ENCODE measurements at regions of chr17 and their contacts with region 1.

Region 1: GRCh38 chr17:33520426-33521330 is 227.6 kb upstream of the ASIC2 start:
- DNase-seq: no peak
- ATAC-seq: peak; percentile 81
- H3K4me3 ChIP-seq: no peak overlapping the region
- H3K27ac ChIP-seq: no peak overlapping the region
- H3K4me1 ChIP-seq: no peaks in the 10 kb centered on the region
- H3K27me3 ChIP-seq: no peaks in the 10 kb centered on the region; a peak in 1 of 4 replicates
- CTCF ChIP-seq: peak; percentile 68 to 85 (median 68)
- EP300 ChIP-seq: no peak
- POLR2A ChIP-seq: no peak
- RAD21 ChIP-seq: peak; percentile 38; the same call in 1 of the 2 replicates

Region 2: GRCh38 chr17:33377837-33378595 is 142.7 kb before region 1 on chr17:
- CTCF ChIA-PET with region 1: interaction called, 11 read pairs
- POLR2A ChIA-PET with region 1: no interaction called
- RAD21 ChIA-PET with region 1: no interaction called
- SMC1A ChIA-PET with region 1: interaction called, 4 read pairs
- in situ Hi-C with region 1: no loop called
- intact Hi-C with region 1: no loop called
- DNase-seq: no peak
- ATAC-seq: peak; percentile 32; the same call in 1 of the 3 replicates
- H3K4me3 ChIP-seq: no peak overlapping the region
- H3K27ac ChIP-seq: no peak overlapping the region
- H3K4me1 ChIP-seq: no peaks in the 10 kb centered on the region
- H3K27me3 ChIP-seq: peaks cover 0 to 4% of the 10 kb centered on the region in 2 experiments; a peak in 1 of 4 replicates
- CTCF ChIP-seq: no peak; a peak in 1 of 6 replicates
- EP300 ChIP-seq: no peak
- POLR2A ChIP-seq: no peak
- RAD21 ChIP-seq: no peak

Region 3: GRCh38 chr17:33459078-33459940 is 61.4 kb before region 1 on chr17:
- CTCF ChIA-PET with region 1: interaction called, 29 read pairs
- POLR2A ChIA-PET with region 1: no interaction called
- RAD21 ChIA-PET with region 1: interaction called, 15 read pairs
- SMC1A ChIA-PET with region 1: interaction called, 26 read pairs
- in situ Hi-C with region 1: no loop called
- intact Hi-C with region 1: no loop called
- DNase-seq: peak; percentile 44
- ATAC-seq: peak; percentile 93
- H3K4me3 ChIP-seq: no peak overlapping the region
- H3K27ac ChIP-seq: no peak overlapping the region
- H3K4me1 ChIP-seq: peaks cover 3% of the 10 kb centered on the region; the same call in 1 of the 2 replicates
- H3K27me3 ChIP-seq: no peaks in the 10 kb centered on the region
- CTCF ChIP-seq: peak in 2 of 3 experiments; percentile 10 to 35; a peak in 2 of 6 replicates
- EP300 ChIP-seq: peak; percentile 21 to 44; a peak in 1 of 4 replicates
- POLR2A ChIP-seq: no peak
- RAD21 ChIP-seq: no peak

Region 4: GRCh38 chr17:33506889-33507650 is 13.6 kb before region 1 on chr17:
- CTCF ChIA-PET with region 1: interaction called, 12 read pairs
- POLR2A ChIA-PET with region 1: no interaction called
- RAD21 ChIA-PET with region 1: no interaction called
- SMC1A ChIA-PET with region 1: interaction called, 4 read pairs
- in situ Hi-C with region 1: no loop called
- intact Hi-C with region 1: no loop called
- DNase-seq: no peak
- ATAC-seq: peak; percentile 48
- H3K4me3 ChIP-seq: no peak overlapping the region
- H3K27ac ChIP-seq: no peak overlapping the region
- H3K4me1 ChIP-seq: no peaks in the 10 kb centered on the region
- H3K27me3 ChIP-seq: no peaks in the 10 kb centered on the region
- CTCF ChIP-seq: no peak
- EP300 ChIP-seq: no peak
- POLR2A ChIP-seq: no peak
- RAD21 ChIP-seq: no peak

Region 5: DNA sequence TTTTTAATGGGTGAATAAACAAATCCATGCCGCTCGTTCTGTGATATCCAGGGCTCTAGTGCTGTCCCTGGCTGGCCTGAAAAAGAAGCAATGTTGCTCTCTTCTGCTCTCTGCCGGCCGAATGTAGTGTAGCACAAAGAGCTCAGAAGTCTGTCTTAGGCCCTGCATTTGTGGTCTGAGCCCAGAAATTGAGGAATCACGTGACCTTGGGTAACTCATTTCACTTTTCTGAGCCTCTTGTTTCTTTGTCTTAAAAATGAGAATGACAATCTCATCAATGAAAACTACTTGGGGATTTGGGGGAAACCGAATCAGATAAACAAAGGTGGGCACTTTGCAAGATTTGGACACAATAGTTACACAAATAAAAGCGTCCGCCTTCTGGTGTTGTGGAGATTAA is 154.0 kb after region 1 on chr17:
- CTCF ChIA-PET with region 1: interaction called, 24 read pairs
- POLR2A ChIA-PET with region 1: no interaction called
- RAD21 ChIA-PET with region 1: interaction called, 6 read pairs
- SMC1A ChIA-PET with region 1: interaction called, 4 read pairs
- in situ Hi-C with region 1: loop called (anchors 10 kb)
- intact Hi-C with region 1: loop called (anchors 2 kb)
- DNase-seq: peak; percentile 19
- ATAC-seq: peak; percentile 96
- H3K4me3 ChIP-seq: no peak overlapping the region
- H3K27ac ChIP-seq: no peak overlapping the region
- H3K4me1 ChIP-seq: no peaks in the 10 kb centered on the region
- H3K27me3 ChIP-seq: no peaks in the 10 kb centered on the region
- CTCF ChIP-seq: peak; percentile 77 to 80 (median 79)
- EP300 ChIP-seq: no peak
- POLR2A ChIP-seq: no peak
- RAD21 ChIP-seq: peak; percentile 69

Region 6: DNA sequence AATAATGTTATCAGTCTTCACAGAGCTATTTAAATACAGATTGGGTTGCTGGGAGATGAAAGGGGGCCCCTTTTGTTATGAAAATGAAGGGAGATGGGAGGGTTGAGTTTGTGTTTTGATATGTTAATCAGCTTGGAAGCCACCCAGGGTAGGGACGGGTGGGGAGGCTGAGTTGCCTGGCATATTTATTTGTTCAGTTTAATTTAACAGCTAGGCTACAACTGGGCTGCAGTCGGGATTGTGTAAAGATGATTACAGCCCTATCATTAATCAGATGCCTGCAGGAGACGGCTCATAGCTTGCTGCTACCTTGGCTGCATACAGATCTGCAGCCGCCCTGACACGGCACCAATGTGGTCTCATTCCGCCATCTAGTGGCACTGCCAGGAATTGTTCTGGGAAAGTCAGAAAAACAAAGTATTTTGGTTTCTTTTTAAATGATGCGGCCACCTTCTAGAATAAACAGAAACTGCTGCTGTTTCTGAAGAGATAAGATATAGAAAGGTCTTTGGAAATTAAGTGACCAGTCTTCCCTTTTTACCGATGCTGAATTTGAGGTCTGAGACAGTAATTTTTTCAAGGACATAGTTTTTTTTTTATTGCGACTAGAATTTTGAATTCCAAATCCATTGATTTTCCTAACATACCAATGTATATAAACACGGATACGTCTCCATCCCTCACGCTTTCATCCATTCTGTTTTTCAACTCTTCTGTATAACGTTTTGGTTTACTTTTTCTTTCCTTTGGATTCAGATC is 230.4 kb after region 1 on chr17:
- CTCF ChIA-PET with region 1: interaction called, 3 read pairs
- POLR2A ChIA-PET with region 1: no interaction called
- RAD21 ChIA-PET with region 1: no interaction called
- SMC1A ChIA-PET with region 1: interaction called, 3 read pairs
- in situ Hi-C with region 1: loop called (anchors 10 kb)
- intact Hi-C with region 1: loop called (anchors 1 kb)
- DNase-seq: peak; percentile 16
- ATAC-seq: peak; percentile 85
- H3K4me3 ChIP-seq: no peak overlapping the region
- H3K27ac ChIP-seq: no peak overlapping the region
- H3K4me1 ChIP-seq: no peaks in the 10 kb centered on the region
- H3K27me3 ChIP-seq: no peaks in the 10 kb centered on the region; a peak in 1 of 4 replicates
- CTCF ChIP-seq: peak; percentile 88 to 91 (median 89)
- EP300 ChIP-seq: no peak
- POLR2A ChIP-seq: no peak
- RAD21 ChIP-seq: peak; percentile 87

Region 7: GRCh38 chr17:33769066-33769465 is 248.4 kb after region 1 on chr17:
- CTCF ChIA-PET with region 1: no interaction called
- POLR2A ChIA-PET with region 1: no interaction called
- RAD21 ChIA-PET with region 1: no interaction called
- SMC1A ChIA-PET with region 1: no interaction called
- in situ Hi-C with region 1: no loop called
- intact Hi-C with region 1: no loop called
- DNase-seq: no peak
- ATAC-seq: no peak
- H3K4me3 ChIP-seq: no peak overlapping the region
- H3K27ac ChIP-seq: no peak overlapping the region
- H3K4me1 ChIP-seq: no peaks in the 10 kb centered on the region
- H3K27me3 ChIP-seq: no peaks in the 10 kb centered on the region; a peak in 1 of 4 replicates
- CTCF ChIP-seq: no peak
- EP300 ChIP-seq: no peak
- POLR2A ChIP-seq: no peak
- RAD21 ChIP-seq: no peak